RWPE1 (cell line): ENCODE measurements at regions of chr18 and their contacts with region 1.

Region 1: GRCh38 chr18:7000484-7001096 is 117.0 kb downstream of the LAMA1 start:
- DNase-seq: peak; percentile 30
- H3K27ac ChIP-seq: no peak overlapping the region
- CTCF ChIP-seq: peak; percentile 61

Region 2: DNA sequence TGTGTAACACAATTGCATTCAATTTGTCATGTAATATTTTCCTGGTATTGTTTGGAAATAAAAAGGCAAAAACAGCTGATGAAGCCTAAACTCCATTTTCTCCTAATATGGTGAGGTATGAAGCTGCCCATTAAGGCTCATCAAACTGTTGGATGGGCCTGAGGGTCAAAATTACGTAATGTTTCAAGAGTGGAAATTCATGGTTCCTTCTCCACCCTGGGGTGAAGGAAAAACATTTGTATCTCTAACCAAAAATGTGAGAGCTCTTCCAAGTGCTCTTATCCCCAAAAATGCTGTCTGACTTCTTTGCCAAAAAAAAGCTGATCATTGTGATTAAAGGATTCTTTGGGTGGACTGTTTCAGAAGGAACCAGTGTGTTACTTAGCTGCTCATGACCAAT is 179.2 kb before region 1 on chr18:
- CTCF ChIA-PET with region 1: no interaction called
- POLR2A ChIA-PET with region 1: no interaction called
- DNase-seq: no peak
- H3K27ac ChIP-seq: no peak overlapping the region
- CTCF ChIP-seq: no peak

Region 3: DNA sequence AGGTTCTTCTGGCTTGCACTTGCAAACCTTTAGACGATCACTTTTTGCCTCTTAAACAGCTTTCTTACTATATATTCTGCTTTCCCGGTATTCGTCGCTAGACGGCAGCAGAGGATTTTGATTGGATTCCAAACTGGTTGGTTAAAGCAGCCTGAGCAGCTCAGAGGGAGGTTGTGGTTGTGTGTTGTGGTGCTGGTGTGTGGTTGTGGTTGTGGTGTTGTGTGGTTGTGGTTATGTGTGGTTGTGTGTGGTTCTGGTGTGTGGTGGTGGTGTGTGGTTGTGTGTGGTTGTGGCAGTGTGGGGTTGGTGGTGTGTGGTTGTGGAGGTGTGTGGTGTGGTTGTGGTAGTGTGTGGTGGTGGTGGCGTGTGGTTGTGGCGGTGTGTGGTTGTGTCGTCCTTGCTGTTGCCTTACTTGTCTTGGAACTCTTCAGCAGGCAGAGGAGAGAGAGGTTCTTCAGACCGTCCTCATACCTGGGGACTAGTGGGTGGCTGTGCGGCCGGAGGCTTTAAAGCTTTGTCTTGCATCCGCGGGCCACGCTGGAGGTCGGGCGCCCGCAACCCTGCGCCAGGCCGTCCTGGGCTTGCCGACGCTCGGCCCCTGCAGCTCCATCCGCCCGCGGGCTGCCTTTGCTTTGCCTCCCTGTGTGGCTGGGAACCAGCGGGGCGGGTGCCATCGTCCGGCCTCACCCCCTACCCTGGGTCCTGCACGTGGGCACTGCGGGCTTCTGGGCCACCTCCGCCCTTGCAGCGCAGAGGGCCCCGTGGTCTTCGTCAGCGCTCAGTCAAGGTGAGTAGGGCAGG is 80.3 kb before region 1 on chr18:
- CTCF ChIA-PET with region 1: interaction called, 35 read pairs
- POLR2A ChIA-PET with region 1: no interaction called
- DNase-seq: peak; percentile 44
- H3K27ac ChIP-seq: no peak overlapping the region
- CTCF ChIP-seq: peak; percentile 86